Mammary epithelial cell (primary cell): ENCODE measurements at regions of chr15 and their contacts with region 1.

Region 1: GRCh38 chr15:84741121-84741520 is 7.3 kb upstream of the ZNF592 start:
- DNase-seq: no peak
- H3K4me3 ChIP-seq: no peak overlapping the region
- H3K27ac ChIP-seq: no peak overlapping the region
- H3K4me1 ChIP-seq: no peaks in the 10 kb centered on the region
- H3K27me3 ChIP-seq: no peaks in the 10 kb centered on the region
- CTCF ChIP-seq: no peak

Region 2: DNA sequence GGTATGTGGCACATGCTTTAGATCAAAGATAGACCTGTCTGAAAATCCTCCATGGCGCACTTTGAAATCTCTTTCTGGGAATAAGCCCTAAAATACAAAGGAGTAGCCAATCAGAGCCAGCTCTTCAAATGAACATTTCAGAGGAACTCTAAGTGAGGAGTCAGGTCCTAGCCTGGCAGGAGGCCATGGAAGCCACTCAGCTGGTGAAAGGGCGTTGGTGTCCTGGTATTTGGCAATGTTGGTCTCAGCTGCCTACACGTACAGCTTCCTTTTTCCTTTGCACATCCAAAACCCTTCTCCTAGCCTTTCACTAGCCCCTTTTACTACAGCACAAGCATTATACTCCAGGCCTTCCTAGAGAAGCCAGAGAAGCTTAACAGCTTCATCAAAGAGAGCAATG is 92.6 kb before region 1 on chr15:
- CTCF ChIA-PET with region 1: no interaction called
- dilution Hi-C with region 1: loop called (anchors 5 kb)
- in situ Hi-C with region 1: loop called in 1 of 2 experiments (anchors 10 kb)
- intact Hi-C with region 1: no loop called
- DNase-seq: no peak
- H3K4me3 ChIP-seq: no peak overlapping the region
- H3K27ac ChIP-seq: no peak overlapping the region
- H3K4me1 ChIP-seq: peaks cover 11% of the 10 kb centered on the region
- H3K27me3 ChIP-seq: no peaks in the 10 kb centered on the region
- CTCF ChIP-seq: no peak

Region 3: GRCh38 chr15:84685304-84685703 is 55.8 kb before region 1 on chr15:
- CTCF ChIA-PET with region 1: no interaction called
- dilution Hi-C with region 1: no loop called
- in situ Hi-C with region 1: no loop called
- intact Hi-C with region 1: no loop called
- DNase-seq: peak; percentile 84
- H3K4me3 ChIP-seq: no peak overlapping the region
- H3K27ac ChIP-seq: peak overlapping the region; percentile 19
- H3K4me1 ChIP-seq: no peaks in the 10 kb centered on the region
- H3K27me3 ChIP-seq: no peaks in the 10 kb centered on the region
- CTCF ChIP-seq: no peak

Region 4: GRCh38 chr15:84807228-84807627 is 66.1 kb after region 1 on chr15:
- CTCF ChIA-PET with region 1: no interaction called
- dilution Hi-C with region 1: loop called (anchors 5 kb)
- in situ Hi-C with region 1: no loop called
- intact Hi-C with region 1: no loop called
- DNase-seq: no peak
- H3K4me3 ChIP-seq: no peak overlapping the region
- H3K27ac ChIP-seq: no peak overlapping the region
- H3K4me1 ChIP-seq: no peaks in the 10 kb centered on the region
- H3K27me3 ChIP-seq: no peaks in the 10 kb centered on the region
- CTCF ChIP-seq: no peak